Activated CD4-positive, alpha-beta memory T cell treated with anti-CD3 and anti-CD28 coated beads for 36 hours (primary cell): ENCODE measurements at regions of chr22 and their contacts with region 1.

Region 1: GRCh38 chr22:30104501-30105156 is 24.4 kb downstream of the HORMAD2 start:
- DNase-seq: no peak
- H3K4me3 Mint-ChIP-seq: no peak overlapping the region
- H3K27ac Mint-ChIP-seq: peak overlapping the region; percentile 85
- H3K4me1 Mint-ChIP-seq: peaks cover 39% of the 10 kb centered on the region
- H3K27me3 Mint-ChIP-seq: no peaks in the 10 kb centered on the region

Region 2: DNA sequence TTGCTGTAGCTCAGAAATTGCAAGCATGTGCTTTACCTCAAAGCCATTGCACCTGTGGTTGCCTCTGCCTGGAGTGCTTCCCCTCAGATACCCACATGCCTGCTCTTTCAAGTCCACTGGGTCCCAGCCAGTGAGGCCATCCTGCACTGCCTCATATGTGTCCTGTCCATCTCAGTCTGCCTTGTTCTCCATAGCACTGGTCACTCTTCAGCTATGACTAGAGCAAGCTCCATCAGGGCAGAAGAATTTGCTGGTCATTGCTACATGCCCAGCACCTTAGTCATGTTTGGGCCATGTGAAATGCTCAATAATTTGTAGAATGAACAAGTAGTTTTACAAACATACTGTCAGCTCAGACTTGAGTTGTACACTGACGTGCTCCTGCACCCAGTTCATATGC is 88.8 kb before region 1 on chr22:
- CTCF ChIA-PET with region 1: no interaction called
- POLR2A ChIA-PET with region 1: no interaction called
- intact Hi-C with region 1: no loop called
- DNase-seq: no peak
- H3K4me3 Mint-ChIP-seq: no peak overlapping the region
- H3K27ac Mint-ChIP-seq: no peak overlapping the region
- H3K4me1 Mint-ChIP-seq: no peaks in the 10 kb centered on the region
- H3K27me3 Mint-ChIP-seq: no peaks in the 10 kb centered on the region

Region 3: GRCh38 chr22:30054588-30055033 is 50.0 kb before region 1 on chr22:
- CTCF ChIA-PET with region 1: no interaction called
- POLR2A ChIA-PET with region 1: no interaction called
- intact Hi-C with region 1: no loop called
- DNase-seq: no peak
- H3K4me3 Mint-ChIP-seq: no peak overlapping the region
- H3K27ac Mint-ChIP-seq: no peak overlapping the region
- H3K4me1 Mint-ChIP-seq: no peaks in the 10 kb centered on the region
- H3K27me3 Mint-ChIP-seq: no peaks in the 10 kb centered on the region

Region 4: DNA sequence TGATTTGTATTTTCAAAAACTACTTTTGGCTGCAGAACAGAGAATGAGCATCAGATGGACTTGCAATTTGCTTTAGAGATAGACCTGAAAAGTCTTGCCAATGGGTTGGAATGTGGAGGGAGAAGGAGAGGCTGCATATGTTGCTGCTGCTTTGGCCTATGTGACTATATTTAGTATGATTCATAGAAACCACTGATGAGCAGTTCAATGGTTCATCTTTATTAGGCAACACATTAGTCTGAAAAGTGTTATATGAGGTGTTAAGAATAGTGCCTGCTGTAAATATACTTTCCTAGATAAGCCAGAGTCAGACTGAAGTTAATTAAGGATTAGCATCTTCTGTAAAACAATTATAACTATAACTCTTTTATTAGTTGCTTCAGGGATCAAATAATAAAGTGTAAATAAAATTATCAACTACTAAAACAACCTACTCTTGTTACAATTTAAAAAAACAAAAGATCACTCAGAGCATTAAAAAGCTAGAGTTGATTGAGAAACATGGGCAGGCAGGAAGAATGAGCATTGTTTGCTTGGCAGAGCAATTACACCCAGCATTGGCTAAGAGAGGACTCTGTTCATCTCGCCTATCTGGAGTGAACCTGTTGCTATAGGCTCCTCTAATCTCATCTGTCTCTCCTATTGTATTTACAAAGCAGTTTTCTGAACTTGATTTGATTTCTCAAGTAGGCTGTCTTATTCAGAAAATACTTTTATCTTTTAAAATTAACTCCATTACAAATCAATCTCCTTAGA is 11.9 kb after region 1 on chr22:
- CTCF ChIA-PET with region 1: interaction called, 37 read pairs
- POLR2A ChIA-PET with region 1: no interaction called
- intact Hi-C with region 1: no loop called
- DNase-seq: no peak
- H3K4me3 Mint-ChIP-seq: no peak overlapping the region
- H3K27ac Mint-ChIP-seq: no peak overlapping the region
- H3K4me1 Mint-ChIP-seq: peaks cover 15% of the 10 kb centered on the region
- H3K27me3 Mint-ChIP-seq: no peaks in the 10 kb centered on the region

Region 5: DNA sequence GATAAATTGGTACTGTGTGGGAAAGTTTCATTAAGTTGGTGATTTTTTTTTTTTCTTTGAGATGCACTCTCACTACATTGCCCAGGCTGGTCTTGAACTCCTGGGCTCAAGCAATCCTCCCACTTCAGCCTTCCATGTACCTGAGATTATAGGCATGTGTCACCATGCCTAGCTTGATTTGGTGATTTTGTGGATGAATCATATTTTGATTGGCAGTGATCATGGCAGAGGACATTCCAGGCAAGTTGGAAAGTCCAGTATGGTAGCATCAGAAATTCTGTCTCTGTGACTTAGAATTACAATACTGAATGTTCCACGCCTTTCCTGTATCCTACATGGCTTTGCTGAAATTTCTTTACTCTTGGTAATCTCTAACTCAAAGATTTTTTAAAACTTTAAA is 25.0 kb after region 1 on chr22:
- CTCF ChIA-PET with region 1: no interaction called
- POLR2A ChIA-PET with region 1: no interaction called
- intact Hi-C with region 1: no loop called
- DNase-seq: no peak
- H3K4me3 Mint-ChIP-seq: no peak overlapping the region
- H3K27ac Mint-ChIP-seq: no peak overlapping the region
- H3K4me1 Mint-ChIP-seq: peaks cover 12% of the 10 kb centered on the region
- H3K27me3 Mint-ChIP-seq: no peaks in the 10 kb centered on the region

Region 6: GRCh38 chr22:30178181-30179126 is 73.8 kb after region 1 on chr22:
- CTCF ChIA-PET with region 1: interaction called, 13 read pairs
- POLR2A ChIA-PET with region 1: interaction called, 3 read pairs
- intact Hi-C with region 1: no loop called
- DNase-seq: peak; percentile 73
- H3K4me3 Mint-ChIP-seq: no peak overlapping the region
- H3K27ac Mint-ChIP-seq: peak overlapping the region; percentile 94
- H3K4me1 Mint-ChIP-seq: peaks cover 69% of the 10 kb centered on the region
- H3K27me3 Mint-ChIP-seq: no peaks in the 10 kb centered on the region

Region 7: DNA sequence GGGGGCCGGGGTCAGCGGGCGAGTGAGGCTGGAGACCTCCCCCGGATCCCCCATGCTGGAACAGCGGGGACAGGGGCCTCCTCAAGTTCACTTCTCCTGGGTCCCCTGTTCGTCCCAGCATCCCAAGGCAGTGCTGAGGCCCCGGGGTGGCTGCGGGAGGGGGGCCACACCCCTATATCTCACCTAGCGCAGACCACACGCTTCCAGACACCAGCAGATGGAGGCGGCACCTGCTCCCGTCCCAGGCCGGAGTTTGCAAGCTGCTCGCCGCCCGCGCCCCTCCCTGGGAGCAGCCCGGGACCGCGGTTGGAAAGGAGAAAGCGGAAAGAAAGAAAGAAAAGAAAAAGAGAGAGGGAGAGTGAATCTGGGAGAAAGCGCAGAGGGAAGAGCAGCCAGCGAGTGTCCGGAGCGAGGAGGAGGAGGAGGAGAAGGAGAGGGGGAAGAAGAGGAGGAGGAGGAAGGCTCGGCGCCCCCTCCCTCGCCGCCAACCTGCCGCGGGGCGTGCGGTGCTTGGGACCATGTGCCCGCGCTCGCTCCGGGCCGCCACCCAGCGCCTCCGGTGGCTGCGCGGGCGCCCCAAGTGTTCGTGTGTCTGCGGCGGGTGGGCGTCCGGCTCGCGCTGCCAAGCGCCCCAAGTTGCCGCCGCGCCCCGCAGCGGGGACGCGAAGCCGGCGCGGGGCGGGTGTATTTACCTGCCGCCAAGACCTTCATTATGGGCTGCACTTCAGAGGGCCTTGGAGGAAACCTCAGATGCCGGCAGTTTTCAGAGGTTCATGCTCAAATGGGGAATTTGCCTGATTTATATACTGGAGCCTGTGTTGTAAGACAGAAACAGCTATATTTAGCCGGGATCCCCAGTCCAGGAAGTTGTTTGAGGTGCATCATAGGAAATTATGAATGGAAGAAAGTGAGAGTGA is 141.6 kb after region 1 on chr22 and contains the start of gene LIF:
- CTCF ChIA-PET with region 1: interaction called, 7 read pairs
- POLR2A ChIA-PET with region 1: no interaction called
- intact Hi-C with region 1: loop called (anchors 2 kb)
- DNase-seq: peak; percentile 69
- H3K4me3 Mint-ChIP-seq: peak within 1 kb of the TSS; percentile 90
- H3K27ac Mint-ChIP-seq: peak within 1 kb of the TSS; percentile 94
- H3K4me1 Mint-ChIP-seq: peaks cover 73% of the 10 kb centered on the region
- H3K27me3 Mint-ChIP-seq: no peaks in the 10 kb centered on the region
- total RNA-seq, gene LIF: 176 to 189 TPM

Region 8: GRCh38 chr22:30262917-30263741 is 158.5 kb after region 1 on chr22:
- CTCF ChIA-PET with region 1: interaction called, 16 read pairs
- POLR2A ChIA-PET with region 1: no interaction called
- intact Hi-C with region 1: no loop called
- DNase-seq: peak; percentile 86
- H3K4me3 Mint-ChIP-seq: peak overlapping the region; percentile 71
- H3K27ac Mint-ChIP-seq: peak overlapping the region; percentile 69
- H3K4me1 Mint-ChIP-seq: peaks cover 34% of the 10 kb centered on the region
- H3K27me3 Mint-ChIP-seq: no peaks in the 10 kb centered on the region